GM10248 (cell line): ENCODE measurements at regions of chr10 and their contacts with region 1.

Region 1: GRCh38 chr10:86630079-86630478 is 24.3 kb upstream of the OPN4 start:
- DNase-seq: no peak
- CTCF ChIP-seq: no peak

Region 2: DNA sequence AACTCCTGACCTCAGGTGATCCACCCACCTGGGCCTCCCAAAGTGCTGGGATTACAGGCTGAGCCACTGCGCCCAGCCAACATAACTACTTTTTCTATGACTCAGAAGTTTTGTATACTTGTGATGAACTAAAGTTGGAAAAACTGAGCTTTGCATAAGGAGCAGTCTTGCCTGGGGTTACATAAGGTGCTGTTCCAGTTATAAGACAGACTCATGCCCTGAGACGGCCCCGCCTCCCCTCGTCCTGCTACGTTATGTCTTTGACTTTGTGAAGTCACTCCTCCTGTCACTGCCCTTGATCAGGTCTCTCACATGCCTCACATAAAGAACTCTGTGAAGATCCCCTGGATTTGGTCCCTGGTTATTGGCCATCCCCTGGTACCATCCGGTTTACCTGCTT is 16.2 kb before region 1 on chr10:
- CTCF ChIA-PET with region 1: no interaction called
- POLR2A ChIA-PET with region 1: no interaction called
- DNase-seq: no peak
- CTCF ChIP-seq: no peak

Region 3: DNA sequence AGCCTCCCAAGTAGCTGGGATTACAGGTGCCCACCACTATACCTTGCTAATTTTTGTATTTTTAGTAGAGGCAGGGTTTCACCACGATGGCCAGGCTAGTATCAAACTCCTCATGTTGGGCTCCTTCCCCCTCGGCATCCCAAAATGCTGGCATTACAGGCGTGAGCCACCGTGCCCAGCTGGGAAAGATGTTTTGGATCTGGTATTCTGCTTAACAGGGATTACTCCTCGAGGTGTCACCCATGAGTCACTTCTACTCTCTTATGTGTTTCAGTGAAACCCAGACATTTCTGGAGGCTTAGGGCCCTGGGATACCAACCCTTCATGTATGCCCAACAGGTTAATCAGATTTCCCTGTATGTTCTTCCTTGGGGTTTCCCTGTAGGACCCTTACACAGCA is 12.4 kb after region 1 on chr10:
- CTCF ChIA-PET with region 1: interaction called, 10 read pairs
- POLR2A ChIA-PET with region 1: no interaction called
- DNase-seq: peak; percentile 15
- CTCF ChIP-seq: no peak